ENCODE measurements at regions of chr4 and their contacts with region 1.

Region 1: DNA sequence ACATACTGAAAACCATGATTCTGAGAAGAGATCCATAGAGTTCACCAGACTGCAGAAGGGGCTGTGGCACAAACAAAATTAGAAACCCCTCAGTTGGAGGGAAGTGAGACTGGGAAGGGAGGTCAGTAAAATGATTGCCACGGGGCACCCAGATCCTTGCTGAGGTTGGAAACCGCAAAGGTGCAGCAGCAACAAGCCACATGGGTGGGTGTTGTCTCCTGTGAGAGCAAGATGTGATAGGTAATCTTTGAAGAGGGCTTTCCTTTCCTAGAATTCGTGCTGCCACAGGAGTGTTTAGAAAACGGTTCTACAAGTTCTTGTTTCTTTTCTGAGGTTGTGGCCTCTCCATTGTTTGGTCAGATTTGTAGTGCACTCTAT is 85.5 kb downstream of the NFKB1 start:
- DNase-seq: peak; percentile 90
- H3K4me3 Mint-ChIP-seq: peak overlapping the region; percentile 36
- H3K27ac Mint-ChIP-seq: peak overlapping the region; percentile 61
- H3K4me1 Mint-ChIP-seq: peaks cover 71% of the 10 kb centered on the region
- H3K27me3 Mint-ChIP-seq: no peaks in the 10 kb centered on the region

Region 2: DNA sequence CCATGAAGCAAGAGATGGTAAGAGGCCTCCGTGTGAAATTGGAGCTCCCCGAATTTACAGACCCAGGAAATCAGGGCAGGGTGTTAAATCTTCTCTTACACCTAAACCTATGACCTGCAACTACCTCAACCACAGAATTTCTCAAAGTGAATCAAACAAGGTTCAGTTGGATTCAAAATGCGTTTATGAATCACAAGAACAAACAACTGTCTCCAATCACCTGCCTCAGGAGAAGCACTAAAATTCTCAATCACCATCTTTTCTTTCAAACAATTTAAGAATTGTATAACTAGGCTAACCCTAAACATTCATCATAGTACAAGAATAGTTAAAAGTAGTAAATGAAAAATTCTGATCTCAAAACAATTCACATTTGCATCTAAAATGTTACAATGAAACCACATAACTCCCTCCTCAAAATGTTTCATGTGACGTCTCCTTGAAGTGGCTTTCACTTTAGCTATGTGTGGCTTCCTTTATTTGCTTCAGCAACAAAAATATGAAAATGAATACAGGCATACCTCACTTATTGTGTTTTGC is 1258.5 kb before region 1 on chr4:
- intact Hi-C with region 1: loop called (anchors 10 kb)
- DNase-seq: peak; percentile 76
- H3K4me3 Mint-ChIP-seq: peak overlapping the region; percentile 68
- H3K27ac Mint-ChIP-seq: peak overlapping the region; percentile 54
- H3K4me1 Mint-ChIP-seq: peaks cover 18% of the 10 kb centered on the region
- H3K27me3 Mint-ChIP-seq: peaks cover 37% of the 10 kb centered on the region

Region 3: DNA sequence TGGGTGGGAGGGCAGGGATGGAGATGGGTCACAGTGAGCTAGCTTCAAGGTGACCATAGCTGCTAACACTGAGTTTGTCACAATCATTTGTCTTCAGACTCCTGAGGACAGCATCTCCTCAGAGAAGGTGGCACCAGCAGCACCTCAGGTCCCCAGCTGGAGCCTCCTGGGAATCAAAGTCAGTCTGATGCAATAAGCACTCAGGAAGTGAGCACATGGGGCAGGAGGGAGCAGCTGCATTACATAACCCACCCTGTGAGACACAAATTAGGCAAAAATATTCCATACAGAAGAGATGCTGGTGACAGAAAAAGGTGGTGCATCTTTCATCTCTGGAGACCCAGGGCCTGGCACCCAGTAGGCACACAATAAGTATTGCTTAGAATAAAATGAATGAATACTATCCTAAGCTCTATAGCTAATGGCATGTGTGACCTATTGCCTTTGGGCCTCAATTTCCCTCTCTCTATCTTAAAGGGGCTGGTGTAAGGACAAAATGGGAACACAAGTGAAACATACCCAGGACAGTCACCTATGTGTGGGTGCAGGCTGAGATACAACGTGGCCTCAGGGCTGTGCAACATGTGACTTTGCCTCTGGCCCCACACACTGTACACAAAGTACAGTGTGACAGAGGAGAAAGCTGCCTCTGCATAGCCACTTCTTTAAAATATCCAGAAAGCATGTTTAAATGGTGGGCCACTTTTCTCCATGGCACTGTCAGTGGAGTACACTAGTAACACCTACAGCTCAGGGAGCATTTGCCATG is 278.4 kb before region 1 on chr4:
- intact Hi-C with region 1: no loop called
- DNase-seq: peak; percentile 53
- H3K4me3 Mint-ChIP-seq: no peak overlapping the region
- H3K27ac Mint-ChIP-seq: peak overlapping the region; percentile 49
- H3K4me1 Mint-ChIP-seq: peaks cover 21% of the 10 kb centered on the region
- H3K27me3 Mint-ChIP-seq: no peaks in the 10 kb centered on the region

Region 4: GRCh38 chr4:102466298-102466697 is 120.3 kb before region 1 on chr4:
- intact Hi-C with region 1: no loop called
- DNase-seq: no peak
- H3K4me3 Mint-ChIP-seq: no peak overlapping the region
- H3K27ac Mint-ChIP-seq: no peak overlapping the region
- H3K4me1 Mint-ChIP-seq: peaks cover 28% of the 10 kb centered on the region
- H3K27me3 Mint-ChIP-seq: no peaks in the 10 kb centered on the region

Region 5: GRCh38 chr4:102500696-102501446 is 85.8 kb before region 1 on chr4 and contains the start of gene NFKB1:
- intact Hi-C with region 1: loop called (anchors 5 kb)
- DNase-seq: peak; percentile 95
- H3K4me3 Mint-ChIP-seq: peak within 1 kb of the TSS; percentile 95
- H3K27ac Mint-ChIP-seq: peak within 1 kb of the TSS; percentile 95
- H3K4me1 Mint-ChIP-seq: peaks cover 22% of the 10 kb centered on the region
- H3K27me3 Mint-ChIP-seq: no peaks in the 10 kb centered on the region
- total RNA-seq, gene NFKB1: 146 and 148 TPM in 2 replicates

Region 6: DNA sequence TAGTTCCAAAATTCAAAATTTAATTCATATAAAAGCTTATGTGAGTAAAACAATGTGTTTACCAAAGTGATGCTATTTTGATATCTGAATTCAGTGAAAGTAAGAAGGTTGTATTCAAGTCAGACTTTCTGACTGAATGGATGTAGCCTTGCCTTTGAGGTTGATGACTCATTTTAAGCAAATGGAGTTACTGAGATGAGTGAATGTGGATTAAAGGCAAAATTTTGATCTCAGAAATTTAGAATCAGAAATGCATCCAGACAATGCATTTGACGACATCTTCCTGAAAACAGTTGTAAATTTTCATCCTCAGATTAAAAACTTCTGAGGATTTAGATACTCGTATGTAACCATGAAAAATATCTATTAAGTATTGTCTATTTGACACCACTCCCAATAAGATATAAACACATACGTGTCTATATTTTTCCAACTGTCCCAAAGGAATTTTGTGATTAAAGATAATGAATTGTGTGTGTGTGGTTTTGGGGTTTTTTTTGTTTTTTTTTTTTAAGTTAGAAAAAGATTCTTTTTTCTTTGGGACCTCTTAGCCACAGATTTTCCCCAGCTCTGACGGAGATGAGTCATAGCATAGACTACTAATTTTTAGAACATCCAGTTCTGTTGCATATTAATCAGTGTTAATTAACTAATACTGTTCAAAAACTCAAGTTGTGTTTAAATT is 51.1 kb before region 1 on chr4:
- intact Hi-C with region 1: loop called (anchors 2 kb)
- DNase-seq: no peak
- H3K4me3 Mint-ChIP-seq: peak overlapping the region; percentile 20
- H3K27ac Mint-ChIP-seq: peak overlapping the region; percentile 37
- H3K4me1 Mint-ChIP-seq: peaks cover 40% of the 10 kb centered on the region
- H3K27me3 Mint-ChIP-seq: no peaks in the 10 kb centered on the region

Region 7: GRCh38 chr4:102554482-102554881 is 32.2 kb before region 1 on chr4:
- intact Hi-C with region 1: loop called (anchors 5 kb)
- DNase-seq: no peak
- H3K4me3 Mint-ChIP-seq: no peak overlapping the region
- H3K27ac Mint-ChIP-seq: no peak overlapping the region
- H3K4me1 Mint-ChIP-seq: peaks cover 46% of the 10 kb centered on the region
- H3K27me3 Mint-ChIP-seq: no peaks in the 10 kb centered on the region

Region 8: GRCh38 chr4:102598086-102598761 is 11.6 kb after region 1 on chr4:
- intact Hi-C with region 1: loop called (anchors 1 kb)
- DNase-seq: peak; percentile 86
- H3K4me3 Mint-ChIP-seq: peak overlapping the region; percentile 24
- H3K27ac Mint-ChIP-seq: peak overlapping the region; percentile 91
- H3K4me1 Mint-ChIP-seq: peaks cover 65% of the 10 kb centered on the region
- H3K27me3 Mint-ChIP-seq: no peaks in the 10 kb centered on the region

Region 9: GRCh38 chr4:102610007-102610406 is 23.4 kb after region 1 on chr4:
- intact Hi-C with region 1: loop called (anchors 2 kb)
- DNase-seq: no peak
- H3K4me3 Mint-ChIP-seq: no peak overlapping the region
- H3K27ac Mint-ChIP-seq: peak overlapping the region; percentile 73
- H3K4me1 Mint-ChIP-seq: peaks cover 73% of the 10 kb centered on the region
- H3K27me3 Mint-ChIP-seq: no peaks in the 10 kb centered on the region

Measured in activated CD4-positive, alpha-beta T cell treated with anti-CD3 and anti-CD28 coated beads, Interleukin-2, amount 10 ng/mL, durations not matched to agents 24 days and 14 days (primary cell).